T-cell (primary cell): ENCODE measurements at regions of chr1 and their contacts with region 1.

Region 1: GRCh38 chr1:151568626-151569088 is 28.5 kb downstream of the TUFT1 start:
- DNase-seq: peak in 25 of 35 experiments; percentile 0 to 37 (median 8)
- ATAC-seq: peak; percentile 77 to 90 (median 78)
- H3K4me3 ChIP-seq: no peak overlapping the region
- H3K4me3 Mint-ChIP-seq: no peak overlapping the region
- H3K27ac ChIP-seq: peak overlapping the region; percentile 54
- H3K27ac Mint-ChIP-seq: peak overlapping the region; percentile 49 to 61
- H3K4me1 ChIP-seq: no peaks in the 10 kb centered on the region
- H3K4me1 Mint-ChIP-seq: peaks cover 0 to 15% (median 7%) of the 10 kb centered on the region in 3 donors
- H3K27me3 ChIP-seq: no peaks in the 10 kb centered on the region
- H3K27me3 Mint-ChIP-seq: no peaks in the 10 kb centered on the region

Region 2: GRCh38 chr1:151692226-151692625 is 123.6 kb after region 1 on chr1:
- CTCF ChIA-PET with region 1: interaction called in 1 of 2 experiments, 3 read pairs
- POLR2A ChIA-PET with region 1: interaction called in 1 of 2 experiments, 15 read pairs
- DNase-seq: no peak
- ATAC-seq: no peak
- H3K4me3 ChIP-seq: no peak overlapping the region
- H3K4me3 Mint-ChIP-seq: no peak overlapping the region
- H3K27ac ChIP-seq: no peak overlapping the region
- H3K27ac Mint-ChIP-seq: no peak overlapping the region
- H3K4me1 ChIP-seq: no peaks in the 10 kb centered on the region
- H3K4me1 Mint-ChIP-seq: peaks cover 0 to 3% (median 1%) of the 10 kb centered on the region in 3 donors
- H3K27me3 ChIP-seq: no peaks in the 10 kb centered on the region
- H3K27me3 Mint-ChIP-seq: no peaks in the 10 kb centered on the region

Region 3: GRCh38 chr1:151728151-151729054 is 159.7 kb after region 1 on chr1:
- CTCF ChIA-PET with region 1: no interaction called
- POLR2A ChIA-PET with region 1: no interaction called
- DNase-seq: no peak
- ATAC-seq: no peak
- H3K4me3 ChIP-seq: no peak overlapping the region
- H3K4me3 Mint-ChIP-seq: no peak overlapping the region
- H3K27ac ChIP-seq: no peak overlapping the region
- H3K27ac Mint-ChIP-seq: no peak overlapping the region
- H3K4me1 ChIP-seq: no peaks in the 10 kb centered on the region
- H3K4me1 Mint-ChIP-seq: no peaks in the 10 kb centered on the region
- H3K27me3 ChIP-seq: peaks cover 7 to 45% of the 10 kb centered on the region in 2 experiments
- H3K27me3 Mint-ChIP-seq: peaks cover 39 to 68% of the 10 kb centered on the region in 2 donors